HepG2 (cell line): ENCODE measurements at regions of chr4 and their contacts with region 1.

Region 1: GRCh38 chr4:55395529-55396307 is at the start of gene TMEM165:
- DNase-seq: peak; percentile 77
- ATAC-seq: peak; percentile 98
- H3K4me3 ChIP-seq: peak within 1 kb of the TSS; percentile 84 to 98 (median 91)
- H3K27ac ChIP-seq: peak within 1 kb of the TSS; percentile 80
- H3K4me1 ChIP-seq: peaks cover 52% of the 10 kb centered on the region
- H3K27me3 ChIP-seq: no peaks in the 10 kb centered on the region; a peak in 1 of 5 replicates
- CTCF ChIP-seq: peak; percentile 20
- EP300 ChIP-seq: no peak
- POLR2A ChIP-seq: peak; percentile 87 to 95
- RAD21 ChIP-seq: no peak; the same call in 1 of the 2 replicates
- total RNA-seq, gene TMEM165: 32.0 and 54.6 TPM in 2 replicates

Region 2: DNA sequence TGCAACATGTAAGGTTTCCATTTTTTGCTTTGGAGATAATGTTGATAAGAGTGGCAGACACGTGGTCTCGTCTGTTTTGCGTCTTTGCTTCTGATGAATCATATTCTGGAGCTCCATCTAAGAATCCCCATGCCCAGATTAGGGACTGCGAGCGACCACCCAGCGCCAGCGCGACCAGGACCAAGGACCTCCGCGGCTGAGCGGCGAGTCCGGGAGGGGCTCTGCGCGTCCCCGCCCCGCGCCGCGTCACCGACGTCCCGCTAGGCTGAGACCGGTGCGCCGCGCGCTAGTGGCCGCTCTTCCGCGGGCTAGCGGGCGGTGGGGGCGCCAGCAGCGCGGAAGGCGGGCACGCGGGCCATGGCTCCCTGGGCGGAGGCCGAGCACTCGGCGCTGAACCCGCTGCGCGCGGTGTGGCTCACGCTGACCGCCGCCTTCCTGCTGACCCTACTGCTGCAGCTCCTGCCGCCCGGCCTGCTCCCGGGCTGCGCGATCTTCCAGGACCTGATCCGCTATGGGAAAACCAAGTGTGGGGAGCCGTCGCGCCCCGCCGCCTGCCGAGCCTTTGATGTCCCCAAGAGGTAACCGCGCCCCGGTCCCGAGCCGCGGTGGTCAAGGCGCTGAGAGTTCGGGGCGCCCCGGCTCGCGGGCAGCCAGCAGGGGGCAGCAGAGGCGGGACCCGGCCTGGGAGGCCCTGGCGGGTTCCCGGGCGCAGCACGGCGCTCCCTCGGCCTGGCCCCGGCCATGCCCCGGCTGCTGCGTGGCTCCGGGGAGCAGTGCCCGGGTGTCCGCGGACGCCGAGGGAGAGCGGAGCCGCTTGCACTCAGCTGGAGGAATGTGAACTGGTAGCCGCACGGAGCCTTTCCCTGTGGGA is 49.5 kb before region 1 on chr4 and contains the start of gene SRD5A3:
- CTCF ChIA-PET with region 1: no interaction called
- POLR2A ChIA-PET with region 1: interaction called, 8 read pairs
- in situ Hi-C with region 1: no loop called
- intact Hi-C with region 1: loop called (anchors 2 kb)
- DNase-seq: peak; percentile 66
- ATAC-seq: peak; percentile 96
- H3K4me3 ChIP-seq: peak within 1 kb of the TSS; percentile 57 to 70 (median 66)
- H3K27ac ChIP-seq: peak within 1 kb of the TSS; percentile 86
- H3K4me1 ChIP-seq: peaks cover 34% of the 10 kb centered on the region
- H3K27me3 ChIP-seq: no peaks in the 10 kb centered on the region
- CTCF ChIP-seq: peak; percentile 84
- EP300 ChIP-seq: 0 out of 4 replicates have a peak, but pooled peaks of 1 of the 2 experiments have one; percentile 44
- POLR2A ChIP-seq: peak; percentile 79 to 90
- RAD21 ChIP-seq: peak; percentile 93
- total RNA-seq, gene SRD5A3: 12.8 and 18.4 TPM in 2 replicates

Region 3: GRCh38 chr4:55431710-55432336 is 36.1 kb after region 1 on chr4:
- CTCF ChIA-PET with region 1: no interaction called
- POLR2A ChIA-PET with region 1: interaction called, 10 read pairs
- in situ Hi-C with region 1: no loop called
- intact Hi-C with region 1: loop called (anchors 5 kb)
- DNase-seq: no peak
- ATAC-seq: no peak
- H3K4me3 ChIP-seq: no peak overlapping the region
- H3K27ac ChIP-seq: no peak overlapping the region
- H3K4me1 ChIP-seq: no peaks in the 10 kb centered on the region
- H3K27me3 ChIP-seq: no peaks in the 10 kb centered on the region
- CTCF ChIP-seq: no peak
- EP300 ChIP-seq: no peak
- POLR2A ChIP-seq: no peak
- RAD21 ChIP-seq: no peak

Region 4: DNA sequence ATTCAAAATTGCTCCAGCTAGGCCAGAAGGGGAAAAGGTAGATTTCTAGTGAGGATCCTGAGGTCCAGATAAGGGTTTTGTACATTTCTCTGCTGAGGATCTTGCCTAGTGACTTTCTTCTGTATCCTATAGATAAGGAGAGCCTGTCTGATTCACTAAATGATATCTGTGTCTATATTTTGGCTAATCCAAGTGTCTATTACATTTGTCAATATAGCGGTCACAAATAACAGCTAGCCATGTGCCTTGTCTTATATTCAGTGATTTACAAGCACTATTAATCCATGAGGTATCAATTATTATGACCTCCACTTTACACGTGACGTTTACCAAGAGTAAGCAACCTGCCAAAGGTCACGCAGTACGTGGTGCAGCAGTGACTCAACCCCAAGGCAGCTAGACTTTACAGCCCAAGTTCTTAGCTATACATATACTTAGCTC is 41.7 kb after region 1 on chr4:
- CTCF ChIA-PET with region 1: no interaction called
- POLR2A ChIA-PET with region 1: interaction called, 10 read pairs
- in situ Hi-C with region 1: no loop called
- intact Hi-C with region 1: loop called (anchors 5 kb)
- DNase-seq: peak; percentile 31
- ATAC-seq: peak; percentile 76
- H3K4me3 ChIP-seq: no peak overlapping the region
- H3K27ac ChIP-seq: peak overlapping the region; percentile 57
- H3K4me1 ChIP-seq: peaks cover 28% of the 10 kb centered on the region
- H3K27me3 ChIP-seq: no peaks in the 10 kb centered on the region
- CTCF ChIP-seq: no peak
- EP300 ChIP-seq: no peak
- POLR2A ChIP-seq: no peak
- RAD21 ChIP-seq: no peak

Region 5: GRCh38 chr4:55546756-55547465 is 151.2 kb after region 1 on chr4 and contains the start of gene CLOCK:
- CTCF ChIA-PET with region 1: no interaction called
- POLR2A ChIA-PET with region 1: interaction called, 17 read pairs
- in situ Hi-C with region 1: no loop called
- intact Hi-C with region 1: no loop called
- DNase-seq: peak; percentile 74
- ATAC-seq: peak; percentile 90
- H3K4me3 ChIP-seq: peak within 1 kb of the TSS; percentile 78 to 91 (median 89)
- H3K27ac ChIP-seq: peak within 1 kb of the TSS; percentile 98
- H3K4me1 ChIP-seq: peaks cover 38% of the 10 kb centered on the region
- H3K27me3 ChIP-seq: no peaks in the 10 kb centered on the region; a peak in 2 of 5 replicates
- CTCF ChIP-seq: peak; percentile 74
- EP300 ChIP-seq: no peak
- POLR2A ChIP-seq: peak; percentile 50 to 53; a peak in 3 of 4 replicates
- RAD21 ChIP-seq: peak; percentile 61; the same call in 1 of the 2 replicates
- total RNA-seq, gene CLOCK: 13.5 and 17.6 TPM in 2 replicates

Region 6: GRCh38 chr4:55853484-55854046 is 457.8 kb after region 1 on chr4 and contains the start of gene EXOC1:
- CTCF ChIA-PET with region 1: no interaction called
- POLR2A ChIA-PET with region 1: interaction called, 4 read pairs
- in situ Hi-C with region 1: loop called (anchors 25 kb)
- intact Hi-C with region 1: no loop called
- DNase-seq: peak; percentile 95
- ATAC-seq: peak; percentile 95
- H3K4me3 ChIP-seq: peak within 1 kb of the TSS; percentile 95 to 99 (median 97)
- H3K27ac ChIP-seq: peak within 1 kb of the TSS; percentile 62
- H3K4me1 ChIP-seq: peaks cover 57% of the 10 kb centered on the region
- H3K27me3 ChIP-seq: 0 out of 5 replicates have a peak, but pooled peaks cover 0 to 2% of the 10 kb centered on the region in 2 experiments
- CTCF ChIP-seq: no peak
- EP300 ChIP-seq: no peak
- POLR2A ChIP-seq: peak; percentile 63 to 69; a peak in 3 of 4 replicates
- RAD21 ChIP-seq: peak; percentile 28; the same call in 1 of the 2 replicates
- total RNA-seq, gene EXOC1: 18.4 and 23.8 TPM in 2 replicates